ENCODE measurements at regions of chr3 and their contacts with region 1.

Region 1: DNA sequence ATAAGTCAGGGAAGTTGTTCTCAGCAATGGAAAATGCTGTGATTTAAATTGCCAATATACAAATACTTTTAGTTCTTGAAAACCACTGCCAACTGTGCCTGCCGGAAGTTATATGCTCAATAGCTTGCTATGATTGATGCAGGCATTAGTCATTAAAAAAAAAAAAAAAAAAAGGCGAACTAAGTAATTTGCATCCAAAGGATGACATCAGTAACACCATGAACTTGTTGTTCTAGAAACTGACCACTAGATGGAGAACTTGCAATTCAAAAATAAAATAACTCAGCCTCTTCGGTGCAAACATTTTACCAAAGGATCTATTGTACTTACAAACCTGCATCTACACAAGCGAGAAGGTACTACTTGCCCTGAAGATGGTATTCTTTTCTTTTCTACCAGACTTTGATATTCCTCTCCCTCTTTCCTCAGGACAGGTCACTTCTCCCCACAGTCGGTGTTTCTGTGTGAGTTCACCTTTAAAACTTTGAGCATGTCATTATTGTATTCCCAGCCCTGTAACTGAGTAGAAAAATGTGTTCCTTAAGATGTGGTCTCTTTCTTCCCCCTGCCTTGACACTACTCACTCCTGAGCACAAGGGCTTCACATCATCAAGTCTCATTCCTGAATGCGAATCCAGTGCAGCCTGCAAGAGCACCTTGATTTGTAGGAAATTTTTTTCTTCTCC is 115.0 kb upstream of the VEPH1 start:
- DNase-seq: peak; percentile 29
- H3K4me3 Mint-ChIP-seq: no peak overlapping the region
- H3K27ac Mint-ChIP-seq: no peak overlapping the region
- H3K4me1 Mint-ChIP-seq: peaks cover 9% of the 10 kb centered on the region
- H3K27me3 Mint-ChIP-seq: peaks cover 13% of the 10 kb centered on the region
- CTCF ChIP-seq: peak; percentile 80

Region 2: GRCh38 chr3:157785102-157785826 is 167.0 kb after region 1 on chr3:
- CTCF ChIA-PET with region 1: no interaction called
- intact Hi-C with region 1: loop called (anchors 5 kb)
- DNase-seq: peak; percentile 78
- H3K4me3 Mint-ChIP-seq: no peak overlapping the region
- H3K27ac Mint-ChIP-seq: no peak overlapping the region
- H3K4me1 Mint-ChIP-seq: peaks cover 31% of the 10 kb centered on the region
- H3K27me3 Mint-ChIP-seq: no peaks in the 10 kb centered on the region
- CTCF ChIP-seq: no peak

Region 3: GRCh38 chr3:158109804-158110657 is 491.8 kb after region 1 on chr3 and contains the start of gene RSRC1:
- CTCF ChIA-PET with region 1: no interaction called
- intact Hi-C with region 1: loop called (anchors 5 kb)
- DNase-seq: peak; percentile 91
- H3K4me3 Mint-ChIP-seq: peak within 1 kb of the TSS; percentile 83
- H3K27ac Mint-ChIP-seq: peak within 1 kb of the TSS; percentile 84
- H3K4me1 Mint-ChIP-seq: peaks cover 33% of the 10 kb centered on the region
- H3K27me3 Mint-ChIP-seq: peaks cover 21% of the 10 kb centered on the region
- CTCF ChIP-seq: no peak
- total RNA-seq, gene RSRC1: 81.3 and 82.1 TPM in 2 replicates

Region 4: GRCh38 chr3:158532099-158532734 is 914.0 kb after region 1 on chr3:
- CTCF ChIA-PET with region 1: no interaction called
- intact Hi-C with region 1: loop called (anchors 1 kb)
- DNase-seq: peak; percentile 50
- H3K4me3 Mint-ChIP-seq: no peak overlapping the region
- H3K27ac Mint-ChIP-seq: no peak overlapping the region
- H3K4me1 Mint-ChIP-seq: peaks cover 8% of the 10 kb centered on the region
- H3K27me3 Mint-ChIP-seq: no peaks in the 10 kb centered on the region
- CTCF ChIP-seq: peak; percentile 73